ENCODE measurements at regions of chr3 and their contacts with region 1.

Region 1: DNA sequence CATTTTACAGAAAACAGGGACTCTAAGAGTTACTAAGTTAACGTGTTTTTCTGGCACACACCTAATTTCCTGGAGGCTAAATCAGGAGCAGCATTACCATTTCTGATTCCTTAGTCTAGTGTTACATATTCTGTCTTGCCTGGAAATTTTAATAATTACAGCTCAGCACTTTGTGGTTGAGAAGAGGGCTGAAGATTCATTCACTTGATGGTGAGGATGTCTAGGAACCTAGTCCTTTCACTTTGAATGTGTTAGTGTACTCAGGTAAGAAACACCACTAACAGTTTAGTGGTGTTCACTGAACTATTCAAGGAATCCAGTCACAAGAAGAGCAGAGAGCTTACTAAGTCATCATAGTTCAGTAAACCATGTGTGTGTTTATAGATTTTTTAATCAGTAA is 102.8 kb downstream of the STT3B start:
- DNase-seq: no peak
- ATAC-seq: peak in 1 of 4 donors; percentile 51
- H3K4me3 ChIP-seq: no peak overlapping the region
- H3K27ac ChIP-seq: no peak overlapping the region
- H3K4me1 ChIP-seq: peaks cover 17% of the 10 kb centered on the region
- H3K27me3 ChIP-seq: no peaks in the 10 kb centered on the region
- CTCF ChIP-seq: no peak

Region 2: GRCh38 chr3:31531992-31532586 is 103.5 kb before region 1 on chr3:
- intact Hi-C with region 1: loop called in 1 of 2 experiments (anchors 10 kb)
- DNase-seq: peak; percentile 99 to 100
- ATAC-seq: peak; percentile 94 to 97 (median 96)
- H3K4me3 ChIP-seq: peak overlapping the region; percentile 88
- H3K27ac ChIP-seq: peak overlapping the region; percentile 99
- H3K4me1 ChIP-seq: peaks cover 27% of the 10 kb centered on the region
- H3K27me3 ChIP-seq: no peaks in the 10 kb centered on the region
- CTCF ChIP-seq: no peak

Region 3: DNA sequence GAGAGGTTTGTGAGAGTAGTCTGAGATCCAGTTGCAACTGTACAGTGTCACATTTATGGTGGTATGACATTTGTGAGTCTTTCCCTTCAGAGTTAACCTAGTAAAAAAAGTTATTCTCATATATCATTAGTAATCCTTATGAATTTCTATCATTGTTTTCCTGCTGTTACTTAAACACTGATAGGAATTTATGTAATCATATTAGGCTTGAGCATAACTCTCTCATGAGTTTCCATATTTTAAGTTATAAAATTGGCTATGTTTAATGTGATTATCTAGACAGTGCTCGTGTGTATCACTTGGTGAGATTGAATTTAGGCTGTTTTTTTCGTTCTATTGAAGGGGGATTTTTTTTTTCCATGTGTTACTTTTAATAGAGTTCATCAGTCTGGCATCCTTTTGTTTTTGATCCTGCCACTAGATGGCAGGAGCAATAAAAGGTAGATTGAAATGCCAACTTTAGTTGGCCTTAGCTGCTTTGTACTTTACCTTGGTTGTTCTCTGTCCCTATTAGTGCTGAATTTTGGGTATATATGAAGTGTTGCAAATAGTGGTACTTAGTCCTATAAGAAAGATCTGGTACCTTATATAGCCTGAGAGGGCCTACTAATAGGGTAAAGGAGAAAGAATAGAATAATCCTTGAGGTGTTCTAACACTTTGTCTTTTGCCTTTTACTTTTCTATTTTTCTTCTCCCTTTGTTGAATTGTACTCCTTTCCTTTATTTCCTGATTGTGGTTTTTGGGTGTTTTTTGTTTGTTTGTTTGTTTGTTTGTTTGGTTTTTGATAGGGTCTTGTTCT is 84.9 kb before region 1 on chr3:
- intact Hi-C with region 1: no loop called
- DNase-seq: no peak
- ATAC-seq: peak in 3 of 4 donors; percentile 62 to 87 (median 69)
- H3K4me3 ChIP-seq: no peak overlapping the region
- H3K27ac ChIP-seq: no peak overlapping the region
- H3K4me1 ChIP-seq: peaks cover 65% of the 10 kb centered on the region
- H3K27me3 ChIP-seq: no peaks in the 10 kb centered on the region
- CTCF ChIP-seq: peak; percentile 73

Region 4: DNA sequence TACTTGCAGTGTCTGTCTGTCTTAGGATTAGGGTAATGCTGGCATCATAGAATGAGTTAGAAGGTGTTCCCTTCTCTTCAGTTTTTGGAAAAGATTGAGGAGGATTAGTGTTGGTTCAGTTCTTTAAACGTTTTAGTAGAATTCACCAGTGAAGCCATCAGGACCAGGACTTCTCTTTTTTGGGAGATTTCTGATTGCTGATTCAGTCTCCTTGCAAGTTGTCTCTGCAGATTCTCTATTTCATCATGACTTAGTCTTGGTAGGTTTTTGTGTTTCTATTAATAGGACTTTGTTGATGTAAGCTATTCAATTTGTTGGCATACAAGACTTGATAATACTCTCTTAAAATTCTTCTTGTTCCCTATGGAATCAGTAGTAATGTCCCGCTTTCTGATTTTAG is 53.9 kb before region 1 on chr3:
- intact Hi-C with region 1: loop called in 1 of 2 experiments (anchors 5 kb)
- DNase-seq: no peak
- ATAC-seq: peak in 1 of 4 donors; percentile 33
- H3K4me3 ChIP-seq: peak overlapping the region; percentile 13
- H3K27ac ChIP-seq: peak overlapping the region; percentile 91
- H3K4me1 ChIP-seq: peaks cover 29% of the 10 kb centered on the region
- H3K27me3 ChIP-seq: no peaks in the 10 kb centered on the region
- CTCF ChIP-seq: no peak

Region 5: DNA sequence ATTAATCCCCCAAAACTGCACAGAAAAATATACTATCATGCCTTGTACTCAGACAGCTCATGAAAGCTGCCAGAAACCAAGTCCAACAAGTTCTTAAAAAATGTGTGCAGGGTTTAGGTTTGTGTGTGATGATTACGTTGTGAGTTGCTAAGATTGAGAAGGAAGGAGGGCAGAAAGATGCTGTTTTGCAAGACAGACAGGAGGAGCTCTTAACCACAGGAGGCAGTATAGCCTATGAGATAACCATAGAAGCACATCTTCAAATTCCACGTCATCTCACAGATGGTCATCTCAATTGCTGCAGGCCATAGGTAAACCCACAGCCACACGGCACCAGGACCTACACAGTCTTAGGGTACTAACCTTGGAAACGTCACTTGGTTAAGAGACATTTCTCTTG is 89.1 kb after region 1 on chr3:
- intact Hi-C with region 1: no loop called
- DNase-seq: no peak
- ATAC-seq: no peak
- H3K4me3 ChIP-seq: no peak overlapping the region
- H3K27ac ChIP-seq: no peak overlapping the region
- H3K4me1 ChIP-seq: no peaks in the 10 kb centered on the region
- H3K27me3 ChIP-seq: no peaks in the 10 kb centered on the region
- CTCF ChIP-seq: no peak

Measured in psoas muscle (tissue), 8 donors.